ENCODE measurements at regions of chr2 and their contacts with region 1.

Region 1: DNA sequence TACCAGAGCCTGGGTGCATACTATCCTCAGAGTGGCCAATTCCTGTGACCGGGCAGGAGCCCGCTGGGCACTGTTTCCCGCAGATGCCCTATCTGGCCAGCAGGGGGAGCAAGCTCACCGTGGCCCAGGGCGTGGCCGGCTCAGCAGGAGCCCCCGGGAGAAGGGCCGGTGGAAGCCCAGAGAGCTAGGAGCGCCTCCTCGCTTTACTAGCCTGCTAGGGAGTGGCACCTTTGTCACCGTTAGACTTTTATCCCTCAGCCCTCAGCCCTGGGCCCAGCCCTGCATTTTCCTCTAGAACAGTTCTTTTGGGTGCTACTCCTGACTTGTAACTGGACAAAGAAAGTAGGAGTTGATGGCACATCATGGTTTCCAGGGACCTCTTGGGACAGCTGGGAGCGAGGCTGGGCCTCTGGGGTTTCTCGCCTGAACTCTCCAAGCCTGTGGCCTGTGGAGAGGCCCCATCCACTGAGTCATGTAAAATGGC is 24.0 kb downstream of the TMEM177 start:
- DNase-seq: peak; percentile 27 to 80 (median 71)
- ATAC-seq: peak; percentile 87
- H3K4me3 ChIP-seq: no peak overlapping the region
- H3K4me3 Mint-ChIP-seq: no peak overlapping the region
- H3K27ac ChIP-seq: no peak overlapping the region
- H3K27ac Mint-ChIP-seq: no peak overlapping the region
- H3K4me1 ChIP-seq: peaks cover 12% of the 10 kb centered on the region
- H3K4me1 Mint-ChIP-seq: peaks cover 12% of the 10 kb centered on the region
- H3K27me3 ChIP-seq: peaks cover 0 to 2% of the 10 kb centered on the region in 2 experiments
- H3K27me3 Mint-ChIP-seq: no peaks in the 10 kb centered on the region
- CTCF ChIP-seq: peak; percentile 92

Region 2: GRCh38 chr2:118333664-118334063 is 1369.3 kb before region 1 on chr2:
- CTCF ChIA-PET with region 1: no interaction called
- POLR2A ChIA-PET with region 1: no interaction called
- intact Hi-C with region 1: no loop called
- DNase-seq: no peak
- ATAC-seq: no peak
- H3K4me3 ChIP-seq: no peak overlapping the region
- H3K4me3 Mint-ChIP-seq: no peak overlapping the region
- H3K27ac ChIP-seq: no peak overlapping the region
- H3K27ac Mint-ChIP-seq: no peak overlapping the region
- H3K4me1 ChIP-seq: no peaks in the 10 kb centered on the region
- H3K4me1 Mint-ChIP-seq: no peaks in the 10 kb centered on the region
- H3K27me3 ChIP-seq: no peaks in the 10 kb centered on the region
- H3K27me3 Mint-ChIP-seq: peaks cover 16% of the 10 kb centered on the region
- CTCF ChIP-seq: no peak

Region 3: DNA sequence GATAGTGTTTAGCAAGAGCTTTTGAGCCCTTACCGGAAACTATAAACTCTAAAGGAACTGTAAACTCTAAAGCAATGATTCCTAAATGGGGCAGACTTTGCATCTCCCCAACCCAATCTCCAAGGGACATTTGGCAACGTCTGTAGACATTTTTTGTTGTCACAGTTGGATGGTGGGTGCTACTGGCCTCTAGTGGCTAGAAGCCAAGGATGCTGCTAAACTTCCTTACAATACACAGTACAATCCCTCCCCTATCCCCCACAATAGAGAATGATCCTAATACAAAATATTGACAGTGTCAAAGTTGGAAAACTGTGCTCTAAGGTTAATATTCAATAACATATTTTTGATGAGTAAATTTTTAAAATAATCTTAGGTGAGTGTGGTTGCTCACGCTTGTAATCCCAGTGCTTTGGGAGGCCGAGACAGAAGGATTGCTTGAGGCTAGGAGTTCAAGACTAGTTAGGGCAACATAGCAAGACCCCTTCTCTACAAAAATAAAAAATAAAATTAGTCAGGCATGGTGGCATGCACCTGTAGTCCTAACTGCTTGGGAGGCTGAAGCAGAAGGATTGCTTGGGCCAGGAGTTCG is 123.5 kb after region 1 on chr2:
- CTCF ChIA-PET with region 1: interaction called, 16 read pairs
- POLR2A ChIA-PET with region 1: no interaction called
- intact Hi-C with region 1: loop called (anchors 1 kb)
- DNase-seq: peak in 5 of 9 experiments; percentile 39 to 71 (median 48)
- ATAC-seq: peak; percentile 72
- H3K4me3 ChIP-seq: no peak overlapping the region
- H3K4me3 Mint-ChIP-seq: no peak overlapping the region
- H3K27ac ChIP-seq: no peak overlapping the region
- H3K27ac Mint-ChIP-seq: no peak overlapping the region
- H3K4me1 ChIP-seq: peaks cover 6% of the 10 kb centered on the region
- H3K4me1 Mint-ChIP-seq: peaks cover 56% of the 10 kb centered on the region
- H3K27me3 ChIP-seq: no peaks in the 10 kb centered on the region
- H3K27me3 Mint-ChIP-seq: no peaks in the 10 kb centered on the region
- CTCF ChIP-seq: peak; percentile 73